ENCODE measurements at regions of chr3 and their contacts with region 1.

Region 1: DNA sequence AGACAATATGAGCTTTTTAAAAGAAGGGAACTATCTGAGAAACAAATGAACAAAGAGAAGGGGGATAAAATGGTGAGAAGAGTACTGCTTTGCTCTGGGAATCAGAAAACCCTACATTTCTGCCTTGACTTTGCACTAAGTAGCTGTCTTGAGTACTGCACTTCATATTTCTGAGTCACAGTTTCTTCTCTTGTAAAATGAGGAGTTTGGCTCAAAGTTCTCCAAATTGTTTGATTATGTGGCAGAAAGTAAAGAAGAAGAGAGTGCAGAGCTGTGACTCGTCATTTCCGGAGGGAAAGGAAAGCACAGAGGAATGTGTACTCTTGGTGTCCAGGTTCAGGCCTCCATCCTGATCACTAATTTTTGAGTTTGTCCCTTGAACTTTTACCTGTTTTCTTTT is 54.7 kb downstream of the TP63 start:
- DNase-seq: peak; percentile 97
- ATAC-seq: peak; percentile 97
- H3K4me3 ChIP-seq: peak overlapping the region; percentile 32; the same call in 1 of the 2 replicates
- H3K27ac ChIP-seq: peak overlapping the region; percentile 96
- H3K4me1 ChIP-seq: peaks cover 44% of the 10 kb centered on the region
- H3K27me3 ChIP-seq: no peaks in the 10 kb centered on the region
- CTCF ChIP-seq: no peak

Region 2: GRCh38 chr3:189084620-189085019 is 601.2 kb before region 1 on chr3:
- CTCF ChIA-PET with region 1: no interaction called
- POLR2A ChIA-PET with region 1: no interaction called
- intact Hi-C with region 1: no loop called
- DNase-seq: no peak
- ATAC-seq: no peak
- H3K4me3 ChIP-seq: no peak overlapping the region
- H3K27ac ChIP-seq: no peak overlapping the region
- H3K4me1 ChIP-seq: no peaks in the 10 kb centered on the region
- H3K27me3 ChIP-seq: peaks cover 10% of the 10 kb centered on the region; the same call in 1 of the 2 replicates
- CTCF ChIP-seq: no peak

Region 3: DNA sequence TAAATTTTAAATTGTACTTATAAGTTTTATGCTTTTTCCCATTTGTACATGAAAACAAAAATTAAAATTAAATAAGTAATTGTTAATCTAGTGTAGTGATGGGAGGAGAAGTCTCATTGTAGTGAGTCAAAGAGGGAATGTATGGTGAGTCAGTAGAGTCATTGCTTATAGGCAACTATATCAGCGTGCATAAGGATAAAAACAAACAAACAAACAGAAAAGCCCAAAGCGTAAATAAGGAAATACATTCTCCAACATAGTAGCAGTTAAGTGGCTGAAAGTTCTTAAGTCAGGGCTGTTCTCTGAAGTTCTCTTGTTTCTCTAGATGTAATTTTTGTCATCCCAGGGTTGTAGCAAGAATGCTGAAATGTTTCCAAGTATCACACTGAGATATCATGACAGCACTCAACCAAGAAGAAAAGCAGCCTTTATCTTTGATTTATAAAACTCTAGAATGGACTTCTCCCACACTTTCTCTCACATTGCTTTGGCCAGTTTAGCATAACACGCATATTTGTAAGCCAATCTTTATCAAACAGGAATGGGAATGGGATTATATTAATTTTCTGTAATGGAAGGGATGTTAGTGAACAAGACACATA is 238.8 kb before region 1 on chr3:
- CTCF ChIA-PET with region 1: no interaction called
- POLR2A ChIA-PET with region 1: no interaction called
- intact Hi-C with region 1: no loop called
- DNase-seq: no peak
- ATAC-seq: no peak
- H3K4me3 ChIP-seq: no peak overlapping the region
- H3K27ac ChIP-seq: no peak overlapping the region
- H3K4me1 ChIP-seq: peaks cover 5% of the 10 kb centered on the region; the same call in 1 of the 2 replicates
- H3K27me3 ChIP-seq: no peaks in the 10 kb centered on the region
- CTCF ChIP-seq: no peak

Region 4: DNA sequence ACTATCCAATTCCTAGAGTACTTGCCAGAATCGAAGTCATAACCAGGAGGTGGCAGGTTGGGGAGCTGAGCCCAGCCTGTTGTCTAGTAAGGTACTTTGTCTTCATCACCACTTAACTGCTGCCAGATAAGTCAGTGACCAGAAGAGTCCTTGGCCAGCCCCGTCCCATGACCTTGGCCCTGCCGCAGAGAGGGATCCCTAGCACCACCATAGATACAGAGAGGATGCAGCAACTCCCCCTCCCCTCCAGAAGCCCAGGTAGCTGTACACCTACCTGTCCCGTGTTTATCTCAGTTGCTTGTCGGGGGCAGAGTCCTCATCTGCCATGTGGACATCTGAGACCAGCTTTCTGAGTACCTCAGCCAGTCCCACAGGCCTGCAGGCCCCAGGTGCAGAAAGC is 208.2 kb before region 1 on chr3:
- CTCF ChIA-PET with region 1: no interaction called
- POLR2A ChIA-PET with region 1: interaction called, 14 read pairs
- intact Hi-C with region 1: no loop called
- DNase-seq: no peak
- ATAC-seq: no peak
- H3K4me3 ChIP-seq: no peak overlapping the region
- H3K27ac ChIP-seq: no peak overlapping the region
- H3K4me1 ChIP-seq: no peaks in the 10 kb centered on the region
- H3K27me3 ChIP-seq: no peaks in the 10 kb centered on the region
- CTCF ChIP-seq: no peak

Region 5: DNA sequence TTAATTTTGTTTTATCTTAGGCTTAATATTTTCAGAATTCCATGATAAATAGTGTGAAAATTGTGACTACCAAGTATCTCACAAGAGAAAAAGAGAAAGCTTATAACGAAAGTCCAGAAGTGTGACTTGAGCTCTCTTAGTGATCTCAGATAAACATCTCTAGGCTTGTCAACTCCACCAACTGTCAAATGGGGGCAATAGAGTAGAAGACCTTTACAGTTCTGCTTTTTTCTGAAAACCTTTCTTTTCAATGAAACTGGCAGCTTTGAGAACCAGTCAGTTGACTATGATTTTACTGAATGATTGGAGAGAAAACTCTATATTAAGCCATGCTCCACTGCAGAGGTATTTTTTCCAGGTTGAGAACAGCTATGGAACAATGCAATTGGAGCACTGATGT is 173.8 kb before region 1 on chr3:
- CTCF ChIA-PET with region 1: no interaction called
- POLR2A ChIA-PET with region 1: interaction called, 6 read pairs
- intact Hi-C with region 1: loop called (anchors 1 kb)
- DNase-seq: no peak
- ATAC-seq: no peak
- H3K4me3 ChIP-seq: no peak overlapping the region
- H3K27ac ChIP-seq: peak overlapping the region; percentile 82; the same call in 1 of the 2 replicates
- H3K4me1 ChIP-seq: peaks cover 21% of the 10 kb centered on the region
- H3K27me3 ChIP-seq: no peaks in the 10 kb centered on the region
- CTCF ChIP-seq: no peak

Region 6: GRCh38 chr3:189756220-189757078 is 70.6 kb after region 1 on chr3:
- CTCF ChIA-PET with region 1: no interaction called
- POLR2A ChIA-PET with region 1: no interaction called
- intact Hi-C with region 1: loop called (anchors 2 kb)
- DNase-seq: peak; percentile 96
- ATAC-seq: peak; percentile 94
- H3K4me3 ChIP-seq: peak overlapping the region; percentile 23; the same call in 1 of the 2 replicates
- H3K27ac ChIP-seq: peak overlapping the region; percentile 48
- H3K4me1 ChIP-seq: peaks cover 32% of the 10 kb centered on the region
- H3K27me3 ChIP-seq: no peaks in the 10 kb centered on the region
- CTCF ChIP-seq: no peak